Right cardiac atrium (tissue), 5 donors: ENCODE measurements at regions of chr6 and their contacts with region 1.

Region 1: DNA sequence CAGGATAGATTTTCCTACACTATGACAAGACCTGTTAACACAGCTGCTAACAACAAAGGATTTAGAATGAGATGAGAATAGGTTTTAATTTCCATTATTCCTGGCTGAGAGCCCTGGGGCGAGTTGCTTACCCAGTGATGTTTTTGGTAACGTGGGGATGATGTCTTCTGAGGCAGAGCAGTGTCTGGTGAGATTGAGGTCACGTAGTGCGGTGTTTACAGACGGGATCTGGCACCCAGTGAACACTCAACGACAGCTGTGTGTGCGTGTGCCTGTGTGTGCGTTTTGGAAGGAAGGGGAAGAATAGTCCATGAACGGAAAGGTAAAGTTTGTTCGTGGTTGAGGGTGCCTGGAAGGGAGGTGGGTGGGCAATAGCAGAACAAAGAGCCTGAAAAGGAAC is 384.7 kb downstream of the C6orf118 start:
- DNase-seq: no peak
- ATAC-seq: peak in 1 of 2 donors; percentile 51
- H3K4me3 ChIP-seq: no peak overlapping the region
- H3K27ac ChIP-seq: no peak overlapping the region
- H3K4me1 ChIP-seq: no peaks in the 10 kb centered on the region
- H3K27me3 ChIP-seq: no peaks in the 10 kb centered on the region

Region 2: DNA sequence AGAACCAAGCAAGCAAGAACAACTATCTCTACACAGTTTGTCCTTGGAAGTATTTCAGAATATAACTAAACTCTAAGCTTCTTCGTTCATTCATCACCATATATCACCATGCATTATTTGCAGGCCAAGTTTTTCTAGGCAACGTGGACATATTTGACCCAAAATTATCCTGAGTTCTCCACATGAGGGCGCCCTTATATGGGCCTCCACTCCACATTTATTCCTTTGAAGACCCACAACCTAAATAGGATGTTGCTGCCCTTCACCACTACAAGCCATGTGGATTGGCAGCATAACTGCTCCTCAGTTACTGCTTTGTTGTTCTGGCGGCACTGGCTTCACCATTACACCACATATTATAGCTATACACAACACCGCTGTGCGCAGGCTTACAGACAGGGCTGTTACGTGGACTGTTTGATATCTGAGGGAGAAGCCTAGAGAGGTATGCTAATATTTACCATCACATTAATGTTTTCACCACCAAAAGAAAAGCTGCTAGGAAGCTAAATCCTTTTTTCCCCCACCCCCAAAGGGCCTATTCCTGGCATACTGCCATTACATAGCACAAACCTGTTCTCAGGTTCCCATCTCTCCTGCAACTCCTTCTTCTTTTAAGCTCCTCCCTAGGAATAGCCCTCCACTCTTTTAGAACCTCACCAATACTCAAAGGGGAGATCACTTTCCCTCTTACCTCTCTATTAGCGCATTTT is 27.0 kb before region 1 on chr6:
- intact Hi-C with region 1: loop called in 1 of 4 experiments (anchors 2 kb)
- DNase-seq: no peak
- ATAC-seq: no peak
- H3K4me3 ChIP-seq: no peak overlapping the region
- H3K27ac ChIP-seq: no peak overlapping the region
- H3K4me1 ChIP-seq: no peaks in the 10 kb centered on the region
- H3K27me3 ChIP-seq: no peaks in the 10 kb centered on the region